ENCODE measurements at regions of chr18 and their contacts with region 1.

Region 1: DNA sequence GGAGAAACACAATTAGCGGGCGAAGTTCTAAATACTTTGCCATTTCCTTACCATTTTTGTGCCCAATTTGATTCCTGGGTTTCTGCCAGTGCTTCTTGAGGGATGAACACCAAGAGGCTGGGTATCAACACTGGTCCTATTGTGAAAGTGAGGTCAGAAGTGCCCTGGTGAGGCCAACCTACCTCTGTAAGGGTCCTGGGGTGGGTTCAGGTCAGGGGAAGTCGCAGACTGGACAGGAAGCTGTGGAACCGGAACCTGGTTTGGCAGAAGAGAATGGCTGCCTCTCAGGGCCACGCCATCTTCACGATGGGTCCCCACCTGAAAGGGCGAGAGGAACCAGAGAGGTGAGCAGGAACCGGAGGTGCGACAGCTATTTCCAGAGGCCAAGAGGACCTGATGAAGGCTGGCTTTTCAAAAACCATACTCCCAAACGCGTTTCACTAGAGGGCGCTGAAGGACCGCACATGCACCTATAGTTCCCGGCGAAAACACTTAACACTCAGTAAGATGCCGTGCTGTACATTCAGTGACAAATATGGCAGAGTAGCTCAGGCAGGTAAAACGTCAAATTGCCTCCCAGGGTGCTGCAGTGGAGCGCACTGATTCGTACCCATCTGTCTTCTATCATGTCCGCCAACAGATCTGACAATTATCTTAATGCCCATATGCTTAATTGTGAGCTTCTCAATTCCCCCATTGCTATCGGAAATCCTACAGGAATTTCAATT is 275.3 kb upstream of the CCDC68 start:
- DNase-seq: peak in 7 of 9 donors; percentile 7 to 51 (median 17)
- ATAC-seq: peak; percentile 78
- H3K4me3 ChIP-seq: no peak overlapping the region
- H3K4me3 Mint-ChIP-seq: no peak overlapping the region
- H3K27ac ChIP-seq: no peak overlapping the region
- H3K27ac Mint-ChIP-seq: no peak overlapping the region
- H3K4me1 ChIP-seq: no peaks in the 10 kb centered on the region
- H3K4me1 Mint-ChIP-seq: peaks cover 0 to 4% (median 0%) of the 10 kb centered on the region in 7 donors
- H3K27me3 ChIP-seq: no peaks in the 10 kb centered on the region
- H3K27me3 Mint-ChIP-seq: no peaks in the 10 kb centered on the region

Region 2: GRCh38 chr18:55275039-55275901 is 40.7 kb after region 1 on chr18:
- CTCF ChIA-PET with region 1: no interaction called
- POLR2A ChIA-PET with region 1: no interaction called
- intact Hi-C with region 1: loop called in 1 of 2 experiments (anchors 2 kb)
- DNase-seq: no peak
- ATAC-seq: no peak
- H3K4me3 ChIP-seq: no peak overlapping the region
- H3K4me3 Mint-ChIP-seq: no peak overlapping the region
- H3K27ac ChIP-seq: no peak overlapping the region
- H3K27ac Mint-ChIP-seq: no peak overlapping the region
- H3K4me1 ChIP-seq: no peaks in the 10 kb centered on the region
- H3K4me1 Mint-ChIP-seq: no peaks in the 10 kb centered on the region
- H3K27me3 ChIP-seq: no peaks in the 10 kb centered on the region
- H3K27me3 Mint-ChIP-seq: peaks cover 0 to 3% (median 0%) of the 10 kb centered on the region in 5 donors

Region 3: GRCh38 chr18:55376387-55376786 is 141.9 kb after region 1 on chr18:
- CTCF ChIA-PET with region 1: interaction called, 4 read pairs
- POLR2A ChIA-PET with region 1: no interaction called
- intact Hi-C with region 1: loop called in 1 of 2 experiments (anchors 10 kb)
- DNase-seq: no peak
- ATAC-seq: peak; percentile 20
- H3K4me3 ChIP-seq: no peak overlapping the region
- H3K4me3 Mint-ChIP-seq: no peak overlapping the region
- H3K27ac ChIP-seq: no peak overlapping the region
- H3K27ac Mint-ChIP-seq: no peak overlapping the region
- H3K4me1 ChIP-seq: no peaks in the 10 kb centered on the region
- H3K4me1 Mint-ChIP-seq: no peaks in the 10 kb centered on the region
- H3K27me3 ChIP-seq: no peaks in the 10 kb centered on the region
- H3K27me3 Mint-ChIP-seq: no peaks in the 10 kb centered on the region

Region 4: GRCh38 chr18:55415258-55415871 is 180.8 kb after region 1 on chr18:
- CTCF ChIA-PET with region 1: no interaction called
- POLR2A ChIA-PET with region 1: no interaction called
- intact Hi-C with region 1: loop called in 1 of 2 experiments (anchors 10 kb)
- DNase-seq: peak; percentile 21 to 66 (median 49)
- ATAC-seq: peak; percentile 78
- H3K4me3 ChIP-seq: no peak overlapping the region
- H3K4me3 Mint-ChIP-seq: no peak overlapping the region
- H3K27ac ChIP-seq: no peak overlapping the region
- H3K27ac Mint-ChIP-seq: no peak overlapping the region
- H3K4me1 ChIP-seq: no peaks in the 10 kb centered on the region
- H3K4me1 Mint-ChIP-seq: peaks cover 0 to 7% (median 2%) of the 10 kb centered on the region in 7 donors
- H3K27me3 ChIP-seq: no peaks in the 10 kb centered on the region
- H3K27me3 Mint-ChIP-seq: peaks cover 0 to 17% (median 0%) of the 10 kb centered on the region in 5 donors

Region 5: GRCh38 chr18:55589625-55590291 is 355.2 kb after region 1 on chr18:
- CTCF ChIA-PET with region 1: no interaction called
- POLR2A ChIA-PET with region 1: no interaction called
- intact Hi-C with region 1: loop called in 1 of 2 experiments (anchors 10 kb)
- DNase-seq: peak; percentile 61 to 89 (median 77)
- ATAC-seq: peak; percentile 97
- H3K4me3 ChIP-seq: peak overlapping the region; percentile 25
- H3K4me3 Mint-ChIP-seq: peak overlapping the region; percentile 82 to 94 (median 89)
- H3K27ac ChIP-seq: peak overlapping the region; percentile 53
- H3K27ac Mint-ChIP-seq: peak overlapping the region; percentile 25 to 86 (median 75)
- H3K4me1 ChIP-seq: no peaks in the 10 kb centered on the region
- H3K4me1 Mint-ChIP-seq: peaks cover 12 to 42% (median 36%) of the 10 kb centered on the region in 7 donors
- H3K27me3 ChIP-seq: peaks cover 0 to 8% of the 10 kb centered on the region in 2 donors
- H3K27me3 Mint-ChIP-seq: peaks cover 38 to 70% (median 48%) of the 10 kb centered on the region in 5 donors

Region 6: DNA sequence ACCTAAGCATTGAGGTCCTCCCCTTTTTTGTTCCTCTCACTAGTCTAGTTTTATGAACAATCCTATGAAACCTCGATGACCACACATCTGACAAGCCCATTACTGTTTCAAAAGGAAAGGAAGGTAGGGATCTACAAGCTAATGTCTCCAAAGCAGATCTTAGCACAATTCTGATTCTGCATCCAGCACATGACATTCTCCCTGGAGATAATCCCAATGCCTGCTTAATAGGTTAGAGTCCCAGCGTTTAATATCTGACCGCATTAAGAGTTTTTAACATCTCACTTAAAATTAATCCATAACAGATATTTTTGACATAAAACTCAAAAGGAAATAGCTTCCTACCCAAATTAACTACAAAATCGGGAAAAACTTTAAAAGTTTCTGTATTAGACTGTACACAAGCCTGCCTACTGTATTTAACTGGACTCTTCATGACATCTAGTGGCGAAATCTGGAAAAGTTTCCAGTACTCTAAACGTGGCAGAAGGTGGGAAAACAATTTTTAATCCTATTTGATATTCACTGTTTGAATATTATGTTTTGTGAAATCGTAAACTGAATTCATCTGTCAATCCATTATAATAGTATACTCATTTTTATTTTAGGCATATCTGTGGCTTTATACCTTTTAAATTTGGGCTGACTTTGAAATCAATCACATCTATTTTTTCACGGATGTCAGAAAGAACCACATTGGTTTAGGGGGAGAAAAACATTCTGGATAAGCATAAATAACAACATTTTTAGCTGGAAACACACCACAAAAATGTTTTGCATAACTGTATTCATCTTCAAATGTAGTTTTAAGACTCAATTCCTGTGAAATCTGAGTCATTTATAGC is 1341.5 kb after region 1 on chr18:
- CTCF ChIA-PET with region 1: no interaction called
- POLR2A ChIA-PET with region 1: no interaction called
- intact Hi-C with region 1: loop called in 1 of 2 experiments (anchors 1 kb)
- DNase-seq: peak in 5 of 9 donors; percentile 4 to 35 (median 16)
- ATAC-seq: peak; percentile 52
- H3K4me3 ChIP-seq: no peak overlapping the region
- H3K4me3 Mint-ChIP-seq: no peak overlapping the region
- H3K27ac ChIP-seq: no peak overlapping the region
- H3K27ac Mint-ChIP-seq: no peak overlapping the region
- H3K4me1 ChIP-seq: no peaks in the 10 kb centered on the region
- H3K4me1 Mint-ChIP-seq: peaks cover 0 to 3% (median 0%) of the 10 kb centered on the region in 7 donors
- H3K27me3 ChIP-seq: no peaks in the 10 kb centered on the region
- H3K27me3 Mint-ChIP-seq: peaks cover 5 to 53% (median 25%) of the 10 kb centered on the region in 5 donors

Region 7: DNA sequence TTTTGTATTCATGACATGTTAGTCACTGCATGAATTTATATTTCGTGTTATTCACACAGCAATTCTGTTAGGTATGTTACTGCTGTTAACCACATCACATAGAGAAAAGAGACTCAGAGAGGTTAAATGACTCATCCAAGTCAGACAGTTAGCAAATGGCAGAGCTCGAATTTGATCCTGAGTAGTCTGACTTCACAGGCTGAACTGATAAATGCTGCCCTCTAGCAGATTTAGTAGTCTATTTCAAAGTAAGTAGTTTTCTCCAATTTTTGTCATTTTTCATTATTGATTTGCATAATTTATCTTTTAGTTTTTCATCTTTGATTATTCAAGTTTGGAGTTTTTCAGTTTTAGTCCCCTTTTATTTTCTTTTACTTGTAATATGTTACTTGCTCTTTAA is 1474.9 kb after region 1 on chr18:
- CTCF ChIA-PET with region 1: no interaction called
- POLR2A ChIA-PET with region 1: no interaction called
- intact Hi-C with region 1: loop called (anchors 10 kb)
- DNase-seq: peak in 7 of 9 donors; percentile 18 to 56 (median 48)
- ATAC-seq: peak; percentile 100
- H3K4me3 ChIP-seq: no peak overlapping the region
- H3K4me3 Mint-ChIP-seq: no peak overlapping the region
- H3K27ac ChIP-seq: no peak overlapping the region
- H3K27ac Mint-ChIP-seq: no peak overlapping the region
- H3K4me1 ChIP-seq: no peaks in the 10 kb centered on the region
- H3K4me1 Mint-ChIP-seq: peaks cover 0 to 13% (median 4%) of the 10 kb centered on the region in 7 donors
- H3K27me3 ChIP-seq: no peaks in the 10 kb centered on the region
- H3K27me3 Mint-ChIP-seq: no peaks in the 10 kb centered on the region